ENCODE measurements at regions of chr3 and their contacts with region 1.

Region 1: DNA sequence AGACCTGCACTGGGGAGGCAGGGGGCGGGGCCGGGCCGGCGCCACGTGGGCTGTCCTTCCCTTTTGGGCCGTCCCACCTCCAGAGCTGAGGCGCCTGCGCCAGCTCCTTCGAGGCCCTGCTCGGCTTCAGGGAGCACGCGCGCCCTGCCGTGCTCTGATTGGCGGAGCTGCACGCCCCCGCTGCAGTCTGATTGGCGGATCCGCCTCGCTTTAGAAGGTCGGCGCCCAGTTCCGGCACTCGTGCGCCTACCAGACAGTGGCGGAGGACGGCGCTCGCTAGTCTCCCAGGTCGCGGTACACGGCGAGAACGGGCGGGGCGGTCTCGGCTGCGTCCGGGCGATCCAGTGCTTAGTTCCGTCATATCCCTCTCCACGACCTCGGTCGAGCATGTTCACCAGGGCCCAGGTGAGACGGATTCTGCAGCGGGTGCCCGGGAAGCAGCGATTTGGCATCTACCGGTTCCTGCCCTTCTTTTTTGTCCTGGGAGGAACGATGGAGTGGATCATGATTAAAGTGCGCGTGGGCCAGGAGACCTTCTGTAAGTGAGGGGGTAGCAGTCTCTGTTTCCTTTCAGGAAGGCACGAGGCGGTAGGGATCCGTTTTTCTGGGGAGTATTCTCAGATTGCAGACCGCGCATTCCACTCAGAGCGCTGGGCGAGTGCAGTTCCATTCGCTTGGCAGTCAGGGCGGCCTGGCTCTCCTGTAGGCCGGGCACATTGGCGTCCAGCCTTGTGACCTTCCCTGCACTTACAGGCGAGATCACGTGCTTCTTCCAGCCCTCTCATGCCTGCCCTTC is at the start of gene UQCC5:
- DNase-seq: peak; percentile 93 to 98 (median 97)

Region 2: DNA sequence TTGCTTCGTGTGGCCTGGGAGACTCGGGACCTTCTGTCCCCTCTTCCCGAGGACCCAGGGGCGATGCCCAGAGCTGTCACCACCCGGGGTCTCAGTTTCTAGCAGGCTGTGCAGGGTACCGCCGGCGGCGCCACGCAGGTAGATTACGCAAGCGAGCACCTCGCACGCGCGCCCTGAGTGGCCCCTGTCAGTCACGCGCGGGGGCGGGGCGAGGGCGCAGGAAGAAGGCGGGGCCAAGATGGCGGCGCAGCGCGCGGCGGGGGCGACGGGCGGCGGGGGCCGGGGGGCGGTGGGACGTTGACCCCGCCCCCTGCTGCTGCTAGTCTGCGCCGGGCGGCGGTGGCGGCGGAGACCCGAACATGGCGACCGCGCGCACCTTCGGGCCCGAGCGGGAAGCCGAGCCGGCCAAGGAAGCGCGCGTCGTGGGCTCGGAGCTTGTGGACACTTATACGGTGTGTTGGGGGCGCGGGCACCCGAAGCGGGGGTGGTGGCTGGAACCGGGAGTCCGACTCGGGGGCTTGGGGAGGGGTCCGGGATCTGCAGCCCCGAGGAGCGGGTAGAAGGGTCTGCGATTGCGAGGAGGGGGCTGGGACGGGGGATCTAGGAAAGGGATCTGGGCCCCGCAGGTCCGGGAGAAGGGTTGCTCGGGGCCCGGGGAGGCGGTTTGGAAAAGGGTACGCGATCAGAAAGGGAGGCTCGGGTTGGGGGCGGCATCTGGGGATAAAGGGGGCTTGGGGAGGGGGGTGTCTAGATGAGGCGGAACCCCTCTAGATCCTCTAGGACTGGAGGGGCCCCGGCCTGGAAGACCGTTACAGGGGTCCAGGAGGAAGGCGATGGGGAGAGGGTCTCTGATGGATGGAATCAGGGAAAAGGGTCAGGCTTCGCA is 81.0 kb before region 1 on chr3 and contains the start of gene NISCH:
- intact Hi-C with region 1: loop called (anchors 5 kb)
- DNase-seq: peak; percentile 67 to 95 (median 90)

Region 3: DNA sequence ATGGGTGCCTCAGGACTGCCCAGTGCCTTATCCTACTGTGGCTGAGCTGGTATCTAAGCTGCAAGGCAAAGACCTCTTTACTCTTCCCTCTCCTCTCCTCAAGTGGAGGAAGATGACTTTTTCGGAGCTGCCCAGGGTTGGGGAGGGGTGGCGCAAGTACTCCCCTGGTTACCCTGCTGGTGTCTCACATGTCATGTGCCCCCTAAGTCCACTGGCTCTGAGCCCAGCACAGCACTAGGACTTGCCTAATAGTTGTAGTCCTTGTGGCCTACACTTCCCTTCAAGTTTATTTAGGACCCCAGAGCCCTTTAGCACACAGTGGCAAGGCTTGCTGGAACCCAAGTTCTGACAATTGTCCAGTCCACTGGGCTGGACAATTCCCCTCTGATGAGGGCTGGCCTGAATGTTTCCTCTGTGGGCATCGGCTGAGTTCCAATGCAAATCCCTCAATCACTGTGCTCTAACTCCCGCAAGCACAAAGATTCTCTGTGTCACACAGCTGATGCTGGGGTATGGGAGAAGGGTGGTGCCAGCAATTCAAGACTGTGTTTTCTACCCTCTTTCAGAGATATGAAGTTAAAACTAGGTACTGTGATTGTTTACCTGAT is 60.2 kb after region 1 on chr3:
- intact Hi-C with region 1: loop called (anchors 5 kb)
- DNase-seq: peak; percentile 50 to 94 (median 85)

Region 4: GRCh38 chr3:52614689-52615088 is 78.1 kb after region 1 on chr3:
- intact Hi-C with region 1: no loop called
- DNase-seq: no peak

Region 5: DNA sequence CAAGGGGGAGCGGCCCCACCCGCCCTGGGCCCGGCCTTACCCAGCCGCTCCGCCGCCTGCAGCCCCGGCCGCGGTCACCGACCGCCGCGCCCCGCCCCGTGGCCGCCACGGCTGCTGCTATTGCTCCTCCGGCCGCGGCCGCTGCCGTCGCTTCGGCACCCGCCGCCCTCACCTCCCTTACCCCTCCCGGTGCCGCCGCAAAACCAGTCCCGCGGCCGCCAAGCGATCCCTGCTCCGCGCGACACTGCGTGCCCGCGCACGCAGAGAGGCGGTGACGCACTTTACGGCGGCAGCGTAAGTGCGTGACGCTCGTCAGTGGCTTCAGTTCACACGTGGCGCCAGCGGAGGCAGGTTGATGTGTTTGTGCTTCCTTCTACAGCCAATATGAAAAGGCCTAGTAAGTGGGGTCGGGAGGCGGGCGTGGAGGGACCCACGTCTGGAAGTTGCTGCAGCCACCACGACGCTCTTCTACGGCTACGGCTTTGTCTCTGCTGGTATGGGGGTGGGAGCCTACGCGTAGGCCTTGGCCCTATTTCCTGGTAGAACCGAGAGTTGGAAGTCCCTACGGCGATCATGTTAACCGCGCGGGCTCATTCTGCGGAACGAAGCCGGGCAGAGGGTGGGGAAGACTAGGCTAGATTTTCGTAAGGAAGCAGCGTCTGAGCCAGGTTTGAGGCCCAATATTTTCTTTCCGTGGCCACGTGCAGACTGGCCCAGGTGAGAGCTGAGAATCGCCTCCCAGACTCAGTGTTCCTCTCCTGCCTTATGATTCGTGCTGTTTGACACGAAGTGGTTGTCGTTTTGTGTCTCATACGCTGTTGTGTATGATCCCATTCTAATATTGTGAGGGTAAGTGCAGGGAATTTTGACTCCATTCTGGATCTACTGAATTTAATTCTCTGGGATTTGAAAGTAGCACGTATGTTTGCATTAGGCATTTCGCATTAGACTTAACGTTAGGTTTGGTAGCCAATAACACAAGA is 149.4 kb after region 1 on chr3 and contains the starts of genes GNL3 and PBRM1:
- intact Hi-C with region 1: loop called (anchors 2 kb)
- DNase-seq: peak; percentile 88 to 97 (median 95)

Measured in head of caudate nucleus (tissue), 42 donors.